Activated CD8-positive, alpha-beta T cell treated with anti-CD3 and anti-CD28 coated beads for 36 hours (primary cell): ENCODE measurements at regions of chr10 and their contacts with region 1.

Region 1: GRCh38 chr10:11270135-11270857 is 252.6 kb downstream of the CELF2 start:
- DNase-seq: peak; percentile 85
- ATAC-seq: peak; percentile 83
- H3K4me3 Mint-ChIP-seq: peak overlapping the region; percentile 3
- H3K27ac Mint-ChIP-seq: peak overlapping the region; percentile 82
- H3K4me1 Mint-ChIP-seq: peaks cover 81% of the 10 kb centered on the region
- H3K27me3 Mint-ChIP-seq: no peaks in the 10 kb centered on the region
- CTCF ChIP-seq: peak; percentile 86

Region 2: DNA sequence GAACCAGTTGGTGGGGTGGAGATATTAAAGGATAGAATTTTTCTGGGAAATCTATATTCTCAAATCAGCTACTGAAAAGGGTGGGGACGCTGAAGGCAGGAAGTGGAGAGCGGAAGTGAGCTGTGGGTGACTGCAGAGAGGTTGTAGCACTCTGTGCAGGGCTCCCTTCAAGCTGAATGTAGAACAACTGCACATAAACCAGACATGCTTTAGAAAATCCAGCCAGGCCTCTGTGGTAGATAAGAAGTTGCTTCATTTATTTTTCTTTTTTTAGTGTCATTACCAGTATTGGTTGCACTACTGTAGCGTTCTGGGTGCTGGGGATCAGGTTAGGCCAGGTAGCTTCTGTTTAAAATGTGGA is 124.8 kb before region 1 on chr10:
- CTCF ChIA-PET with region 1: interaction called, 13 read pairs
- POLR2A ChIA-PET with region 1: no interaction called
- intact Hi-C with region 1: no loop called
- DNase-seq: peak; percentile 79
- ATAC-seq: peak; percentile 63
- H3K4me3 Mint-ChIP-seq: peak overlapping the region; percentile 74
- H3K27ac Mint-ChIP-seq: peak overlapping the region; percentile 93
- H3K4me1 Mint-ChIP-seq: peaks cover 86% of the 10 kb centered on the region
- H3K27me3 Mint-ChIP-seq: no peaks in the 10 kb centered on the region
- CTCF ChIP-seq: no peak

Region 3: GRCh38 chr10:11282156-11282555 is 11.9 kb after region 1 on chr10:
- CTCF ChIA-PET with region 1: interaction called, 18 read pairs
- POLR2A ChIA-PET with region 1: no interaction called
- intact Hi-C with region 1: no loop called
- DNase-seq: no peak
- ATAC-seq: no peak
- H3K4me3 Mint-ChIP-seq: no peak overlapping the region
- H3K27ac Mint-ChIP-seq: peak overlapping the region; percentile 30
- H3K4me1 Mint-ChIP-seq: peaks cover 5% of the 10 kb centered on the region
- H3K27me3 Mint-ChIP-seq: no peaks in the 10 kb centered on the region
- CTCF ChIP-seq: no peak